ENCODE measurements at regions of chr5 and their contacts with region 1.

Region 1: GRCh38 chr5:138178516-138179276 is at the starts of genes BRD8 and KIF20A:
- DNase-seq: peak; percentile 95 to 98
- H3K4me3 ChIP-seq: peak within 1 kb of the TSS; percentile 69
- H3K4me3 Mint-ChIP-seq: no peak within 1 kb of the TSS
- H3K27ac Mint-ChIP-seq: no peak within 1 kb of the TSS
- H3K4me1 ChIP-seq: peaks cover 9% of the 10 kb centered on the region
- H3K4me1 Mint-ChIP-seq: peaks cover 9% of the 10 kb centered on the region
- H3K27me3 ChIP-seq: no peaks in the 10 kb centered on the region
- H3K27me3 Mint-ChIP-seq: no peaks in the 10 kb centered on the region
- CTCF ChIP-seq: no peak
- total RNA-seq, gene BRD8: 97.4 and 104 TPM in 2 replicates
- total RNA-seq, gene KIF20A: 83.7 and 84.9 TPM in 2 replicates

Region 2: DNA sequence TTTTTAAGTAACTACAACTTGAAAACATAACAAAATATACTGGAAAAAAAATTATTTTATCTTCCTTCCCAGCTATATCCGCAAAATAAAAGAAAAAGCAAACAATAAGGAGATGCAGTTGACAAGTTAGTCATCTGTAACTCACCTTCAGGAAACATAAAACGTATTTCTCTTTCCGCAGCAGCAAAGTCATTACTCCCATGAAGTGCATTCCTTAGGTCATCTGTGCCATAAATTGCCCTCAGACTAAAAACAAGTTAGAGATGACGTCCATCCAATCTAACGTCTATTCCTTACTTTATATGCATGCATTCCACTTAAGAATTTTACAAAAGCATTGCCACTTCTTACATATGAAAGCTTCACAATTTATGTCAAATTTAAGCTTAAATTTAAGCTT is 50.4 kb before region 1 on chr5:
- CTCF ChIA-PET with region 1: no interaction called
- POLR2A ChIA-PET with region 1: no interaction called
- intact Hi-C with region 1: no loop called
- DNase-seq: no peak
- H3K4me3 ChIP-seq: no peak overlapping the region
- H3K4me3 Mint-ChIP-seq: no peak overlapping the region
- H3K27ac Mint-ChIP-seq: no peak overlapping the region
- H3K4me1 ChIP-seq: 0 out of 2 replicates have a peak, but pooled peaks cover 6% of the 10 kb centered on the region
- H3K4me1 Mint-ChIP-seq: peaks cover 5% of the 10 kb centered on the region
- H3K27me3 ChIP-seq: no peaks in the 10 kb centered on the region
- H3K27me3 Mint-ChIP-seq: no peaks in the 10 kb centered on the region
- CTCF ChIP-seq: no peak

Region 3: DNA sequence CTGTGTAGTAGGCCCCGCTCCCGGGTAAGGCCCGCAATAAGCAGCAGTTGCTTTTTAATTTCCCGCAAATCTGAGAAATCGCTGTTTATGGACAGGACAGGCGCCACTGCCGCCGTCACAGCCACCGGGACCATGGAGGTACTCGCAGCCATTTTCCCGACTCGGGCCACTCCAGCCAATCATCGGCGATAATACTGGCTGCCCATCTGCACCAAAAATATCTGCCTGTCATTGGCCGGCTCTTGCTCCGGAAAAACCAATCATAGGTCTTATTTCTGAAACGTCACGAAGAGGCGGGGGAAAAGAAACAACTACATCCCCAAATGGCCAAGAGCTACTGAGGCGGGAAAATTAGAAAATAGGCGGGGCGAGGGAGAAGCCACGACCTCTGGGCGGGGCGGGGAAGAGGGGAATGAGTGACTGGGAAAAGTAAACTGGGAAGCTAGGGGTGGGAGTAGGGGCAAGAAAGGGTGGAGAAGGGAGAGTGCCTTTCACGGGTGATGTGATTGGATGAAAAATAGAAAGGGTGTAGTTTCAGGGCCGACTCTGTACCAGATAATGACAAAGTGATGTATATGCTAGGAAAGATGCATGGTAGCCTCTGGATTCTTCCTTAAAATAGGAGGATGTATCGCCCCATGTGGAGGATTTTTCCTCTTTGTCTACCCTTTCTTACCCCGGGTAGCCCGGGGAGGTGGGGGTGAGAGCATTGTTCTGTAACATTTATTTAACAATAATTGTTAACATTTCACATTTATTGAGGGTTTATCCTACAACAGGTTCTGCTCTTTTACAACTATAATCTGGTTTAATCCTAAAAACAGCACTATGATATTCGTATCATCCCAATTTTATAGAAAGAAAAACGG is 34.7 kb after region 1 on chr5 and contains the start of gene CDC23:
- CTCF ChIA-PET with region 1: no interaction called
- POLR2A ChIA-PET with region 1: interaction called, 6 read pairs
- intact Hi-C with region 1: loop called (anchors 1 kb)
- DNase-seq: peak; percentile 96 to 97
- H3K4me3 ChIP-seq: peak within 1 kb of the TSS; percentile 99
- H3K4me3 Mint-ChIP-seq: peak within 1 kb of the TSS; percentile 99
- H3K27ac Mint-ChIP-seq: peak within 1 kb of the TSS; percentile 99
- H3K4me1 ChIP-seq: no peaks in the 10 kb centered on the region
- H3K4me1 Mint-ChIP-seq: no peaks in the 10 kb centered on the region
- H3K27me3 ChIP-seq: no peaks in the 10 kb centered on the region
- H3K27me3 Mint-ChIP-seq: no peaks in the 10 kb centered on the region
- CTCF ChIP-seq: no peak
- total RNA-seq, gene CDC23: 52.9 and 60.7 TPM in 2 replicates

Region 4: DNA sequence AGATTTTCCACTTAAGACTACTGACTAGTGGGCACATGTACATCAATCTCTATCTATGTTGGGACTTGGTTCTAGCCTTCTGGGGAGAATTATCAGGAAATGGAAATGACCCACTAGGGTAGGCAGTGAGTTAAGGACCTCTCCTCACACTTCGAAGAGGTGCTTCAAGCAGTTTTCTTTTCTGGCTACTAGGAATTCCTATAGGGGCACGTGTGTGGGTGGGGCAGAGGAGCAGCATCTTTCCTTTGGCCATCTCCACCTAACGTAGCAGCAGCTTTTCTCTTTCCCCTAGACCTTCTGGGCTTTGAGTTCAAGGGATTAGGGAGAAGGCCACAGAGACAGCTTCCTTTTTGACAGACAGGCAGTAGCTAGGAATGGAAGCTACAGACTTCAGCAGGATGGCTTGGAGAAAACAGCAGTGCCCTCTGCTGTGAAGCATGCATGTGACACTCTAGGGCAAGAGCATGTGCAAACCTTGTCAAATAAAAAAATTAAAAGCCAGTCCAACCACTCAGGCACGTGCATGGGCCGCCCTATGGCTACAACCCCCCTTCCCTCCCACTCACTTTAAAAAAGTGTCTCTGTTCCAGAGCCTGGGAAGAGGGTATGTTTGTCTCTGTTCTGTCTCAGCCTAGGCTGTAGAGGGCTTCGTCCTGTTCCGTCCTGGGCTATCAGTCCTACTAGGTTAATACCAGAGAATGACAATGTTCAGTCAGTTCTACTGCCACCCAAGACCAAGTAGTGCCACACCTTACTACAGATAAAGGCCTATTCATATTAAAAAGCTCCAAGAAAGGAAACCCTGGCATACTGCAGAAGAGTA is 104.4 kb after region 1 on chr5:
- CTCF ChIA-PET with region 1: interaction called, 7 read pairs
- POLR2A ChIA-PET with region 1: no interaction called
- intact Hi-C with region 1: loop called (anchors 1 kb)
- DNase-seq: peak; percentile 78
- H3K4me3 ChIP-seq: no peak overlapping the region
- H3K4me3 Mint-ChIP-seq: no peak overlapping the region
- H3K27ac Mint-ChIP-seq: no peak overlapping the region
- H3K4me1 ChIP-seq: no peaks in the 10 kb centered on the region; the same call in 1 of the 2 replicates
- H3K4me1 Mint-ChIP-seq: no peaks in the 10 kb centered on the region
- H3K27me3 ChIP-seq: no peaks in the 10 kb centered on the region; the same call in 1 of the 2 replicates
- H3K27me3 Mint-ChIP-seq: no peaks in the 10 kb centered on the region
- CTCF ChIP-seq: peak; percentile 71 to 89

Region 5: GRCh38 chr5:138331449-138332368 is 153.0 kb after region 1 on chr5 and contains the start of gene CDC25C:
- CTCF ChIA-PET with region 1: no interaction called
- POLR2A ChIA-PET with region 1: interaction called, 9 read pairs
- intact Hi-C with region 1: loop called (anchors 2 kb)
- DNase-seq: peak; percentile 98 to 99
- H3K4me3 ChIP-seq: peak within 1 kb of the TSS; percentile 69
- H3K4me3 Mint-ChIP-seq: peak within 1 kb of the TSS; percentile 95
- H3K27ac Mint-ChIP-seq: peak within 1 kb of the TSS; percentile 82
- H3K4me1 ChIP-seq: no peaks in the 10 kb centered on the region
- H3K4me1 Mint-ChIP-seq: peaks cover under 1% of the 10 kb centered on the region
- H3K27me3 ChIP-seq: no peaks in the 10 kb centered on the region
- H3K27me3 Mint-ChIP-seq: no peaks in the 10 kb centered on the region
- CTCF ChIP-seq: no peak
- total RNA-seq, gene CDC25C: 22.7 and 22.9 TPM in 2 replicates

Region 6: GRCh38 chr5:138352071-138352721 is 173.5 kb after region 1 on chr5 and contains the start of gene KDM3B:
- CTCF ChIA-PET with region 1: interaction called, 10 read pairs
- POLR2A ChIA-PET with region 1: interaction called, 3 read pairs
- intact Hi-C with region 1: no loop called
- DNase-seq: peak; percentile 82 to 98
- H3K4me3 ChIP-seq: peak within 1 kb of the TSS; percentile 78
- H3K4me3 Mint-ChIP-seq: peak within 1 kb of the TSS; percentile 91
- H3K27ac Mint-ChIP-seq: peak within 1 kb of the TSS; percentile 92
- H3K4me1 ChIP-seq: peaks cover 12% of the 10 kb centered on the region; the same call in 1 of the 2 replicates
- H3K4me1 Mint-ChIP-seq: peaks cover 17% of the 10 kb centered on the region
- H3K27me3 ChIP-seq: no peaks in the 10 kb centered on the region
- H3K27me3 Mint-ChIP-seq: no peaks in the 10 kb centered on the region
- CTCF ChIP-seq: peak; percentile 98 to 99
- total RNA-seq, gene KDM3B: 71.8 and 77.9 TPM in 2 replicates

Region 7: GRCh38 chr5:138386290-138386689 is 207.6 kb after region 1 on chr5:
- CTCF ChIA-PET with region 1: no interaction called
- POLR2A ChIA-PET with region 1: interaction called, 18 read pairs
- intact Hi-C with region 1: no loop called
- DNase-seq: peak in 1 of 2 experiments; percentile 21
- H3K4me3 ChIP-seq: no peak overlapping the region
- H3K4me3 Mint-ChIP-seq: no peak overlapping the region
- H3K27ac Mint-ChIP-seq: no peak overlapping the region
- H3K4me1 ChIP-seq: no peaks in the 10 kb centered on the region
- H3K4me1 Mint-ChIP-seq: no peaks in the 10 kb centered on the region
- H3K27me3 ChIP-seq: no peaks in the 10 kb centered on the region
- H3K27me3 Mint-ChIP-seq: no peaks in the 10 kb centered on the region
- CTCF ChIP-seq: no peak

Region 8: DNA sequence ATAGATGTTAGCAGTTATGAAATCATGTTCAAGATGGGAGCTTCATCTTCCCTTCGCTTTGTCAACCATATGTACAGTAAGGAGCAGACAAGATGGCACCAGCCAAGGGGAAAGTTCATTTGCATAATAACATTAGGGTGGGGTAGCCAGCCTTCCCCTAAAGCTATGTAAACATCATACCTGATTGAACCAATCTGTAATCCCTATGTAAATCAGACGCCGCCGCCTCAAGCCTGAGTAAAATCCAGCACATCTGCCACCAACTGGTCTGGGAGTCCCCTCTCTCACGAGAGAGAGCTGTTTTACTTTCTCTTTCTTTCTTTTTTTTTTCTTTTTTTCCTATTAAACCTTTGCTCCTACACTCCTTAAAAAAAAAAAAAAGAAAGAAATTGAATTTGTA is 229.3 kb after region 1 on chr5:
- CTCF ChIA-PET with region 1: no interaction called
- POLR2A ChIA-PET with region 1: no interaction called
- intact Hi-C with region 1: loop called (anchors 2 kb)
- DNase-seq: peak in 1 of 2 experiments; percentile 5
- H3K4me3 ChIP-seq: no peak overlapping the region
- H3K4me3 Mint-ChIP-seq: no peak overlapping the region
- H3K27ac Mint-ChIP-seq: no peak overlapping the region
- H3K4me1 ChIP-seq: no peaks in the 10 kb centered on the region
- H3K4me1 Mint-ChIP-seq: peaks cover 12% of the 10 kb centered on the region
- H3K27me3 ChIP-seq: no peaks in the 10 kb centered on the region
- H3K27me3 Mint-ChIP-seq: no peaks in the 10 kb centered on the region
- CTCF ChIP-seq: no peak